ENCODE measurements at regions of chr12 and their contacts with region 1.

Region 1: DNA sequence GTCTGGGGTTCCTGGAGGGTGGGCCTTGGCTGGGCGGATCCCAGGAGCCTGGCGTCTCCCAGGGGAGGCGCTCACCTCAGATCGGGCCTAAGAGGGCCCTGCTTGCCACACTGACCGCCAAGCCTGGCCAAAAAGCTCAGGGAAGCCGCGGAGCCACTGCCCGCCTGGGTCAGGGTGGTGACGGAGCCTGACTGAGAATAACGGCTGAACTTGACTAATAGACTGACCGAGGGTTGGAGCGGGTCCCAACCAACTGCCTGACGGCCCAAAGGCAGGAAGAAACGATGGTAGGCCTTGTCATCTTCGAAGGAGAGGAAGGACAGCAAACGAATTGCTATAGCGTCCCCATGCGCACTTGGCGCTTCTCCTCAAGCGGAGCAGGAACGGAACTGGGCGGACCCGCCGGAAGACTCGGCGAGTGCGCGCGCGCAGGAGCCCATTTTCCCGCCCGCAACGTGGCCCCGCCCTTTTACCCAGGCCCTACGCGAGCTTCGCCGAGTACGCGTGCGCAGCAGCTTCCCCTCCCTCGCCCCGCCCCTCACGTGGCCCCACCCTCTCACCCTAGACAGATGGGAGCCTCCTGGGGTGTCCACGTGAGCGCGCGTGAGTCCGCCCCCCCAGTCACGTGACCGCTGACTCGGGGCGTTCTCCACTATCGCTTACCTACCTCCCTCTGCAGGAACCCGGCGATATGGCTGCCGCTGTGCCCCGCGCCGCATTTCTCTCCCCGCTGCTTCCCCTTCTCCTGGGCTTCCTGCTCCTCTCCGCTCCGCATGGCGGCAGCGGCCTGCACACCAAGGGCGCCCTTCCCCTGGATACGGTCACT is at the starts of genes ERP29 and TMEM116:
- DNase-seq: peak; percentile 100
- H3K4me3 ChIP-seq: peak within 1 kb of the TSS; percentile 68 to 100 (median 88)
- H3K27ac ChIP-seq: peak within 1 kb of the TSS; percentile 96 to 99 (median 98)
- H3K4me1 ChIP-seq: peaks cover 26 to 66% (median 44%) of the 10 kb centered on the region in 4 donors
- H3K27me3 ChIP-seq: no peaks in the 10 kb centered on the region
- CTCF ChIP-seq: peak; percentile 47 to 72 (median 68)
- EP300 ChIP-seq: no peak
- POLR2A ChIP-seq: peak; percentile 93
- total RNA-seq, gene ERP29: 33.5 to 35.3 (median 34.9) TPM
- total RNA-seq, gene TMEM116: 3.5 to 8.4 (median 7.5) TPM

Region 2: GRCh38 chr12:111942557-111942956 is 70.4 kb before region 1 on chr12:
- intact Hi-C with region 1: loop called (anchors 5 kb)
- DNase-seq: no peak
- H3K4me3 ChIP-seq: no peak overlapping the region
- H3K27ac ChIP-seq: no peak overlapping the region
- H3K4me1 ChIP-seq: peaks cover 0 to 20% (median 11%) of the 10 kb centered on the region in 4 donors
- H3K27me3 ChIP-seq: no peaks in the 10 kb centered on the region
- CTCF ChIP-seq: no peak
- EP300 ChIP-seq: no peak
- POLR2A ChIP-seq: no peak